ENCODE measurements at regions of chr14 and their contacts with region 1.

Region 1: DNA sequence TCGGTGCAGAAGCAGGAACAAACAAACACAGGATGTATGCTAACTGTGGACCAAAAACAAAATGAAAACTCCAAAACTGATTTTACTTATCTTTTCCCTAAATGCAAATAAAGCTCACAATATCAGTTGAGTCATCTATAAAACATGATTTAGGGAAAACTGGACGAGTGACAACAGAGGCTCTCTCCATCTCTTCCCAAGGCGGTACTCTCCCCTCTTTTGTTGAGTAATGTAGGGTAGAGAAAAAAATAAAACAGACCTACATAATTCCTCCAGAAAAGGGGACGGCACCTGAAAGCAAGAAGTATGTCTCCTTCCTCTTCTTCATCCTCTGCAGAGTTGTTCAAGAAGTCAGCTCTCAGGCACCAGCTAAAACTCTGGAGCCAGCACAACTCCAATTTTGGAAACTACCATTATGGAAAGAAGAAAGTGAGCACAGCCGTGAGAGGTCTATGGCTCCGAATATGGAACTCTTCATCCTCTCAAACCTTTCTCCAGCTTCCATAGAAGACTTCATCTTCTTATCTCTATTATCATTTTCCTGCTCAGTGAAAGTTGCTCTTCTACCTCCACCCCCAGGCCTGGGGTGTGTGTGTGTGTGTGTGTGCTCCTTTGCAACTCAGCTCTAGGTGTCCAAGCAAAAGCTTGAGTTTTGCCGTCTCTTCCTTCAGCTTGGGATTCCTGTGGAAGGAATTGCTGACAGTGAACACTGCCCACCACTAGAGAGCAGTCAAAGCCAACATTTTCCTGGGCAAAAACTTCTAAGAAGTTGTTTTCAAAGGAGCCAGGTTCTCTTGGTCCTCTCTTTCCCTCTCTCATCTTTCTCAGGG is 155.4 kb downstream of the DIO2 start:
- DNase-seq: peak; percentile 84
- ATAC-seq: peak; percentile 62
- H3K4me3 ChIP-seq: 0 out of 2 replicates have a peak overlapping the region, but pooled peaks have one; percentile 2
- H3K27ac ChIP-seq: peak overlapping the region; percentile 14; the same call in 1 of the 2 replicates
- H3K4me1 ChIP-seq: peaks cover 35% of the 10 kb centered on the region
- H3K27me3 ChIP-seq: no peaks in the 10 kb centered on the region
- CTCF ChIP-seq: peak; percentile 89

Region 2: GRCh38 chr14:79011091-79011919 is 1044.6 kb before region 1 on chr14:
- CTCF ChIA-PET with region 1: no interaction called
- POLR2A ChIA-PET with region 1: no interaction called
- intact Hi-C with region 1: loop called (anchors 5 kb)
- DNase-seq: peak; percentile 85
- ATAC-seq: peak; percentile 97
- H3K4me3 ChIP-seq: peak overlapping the region; percentile 23; the same call in 1 of the 2 replicates
- H3K27ac ChIP-seq: peak overlapping the region; percentile 88
- H3K4me1 ChIP-seq: peaks cover 14% of the 10 kb centered on the region
- H3K27me3 ChIP-seq: no peaks in the 10 kb centered on the region
- CTCF ChIP-seq: peak; percentile 47

Region 3: GRCh38 chr14:79992407-79993198 is 63.3 kb before region 1 on chr14:
- CTCF ChIA-PET with region 1: no interaction called
- POLR2A ChIA-PET with region 1: no interaction called
- intact Hi-C with region 1: no loop called
- DNase-seq: no peak
- ATAC-seq: no peak
- H3K4me3 ChIP-seq: no peak overlapping the region
- H3K27ac ChIP-seq: no peak overlapping the region
- H3K4me1 ChIP-seq: 0 out of 2 replicates have a peak, but pooled peaks cover 3% of the 10 kb centered on the region
- H3K27me3 ChIP-seq: no peaks in the 10 kb centered on the region
- CTCF ChIP-seq: no peak

Region 4: DNA sequence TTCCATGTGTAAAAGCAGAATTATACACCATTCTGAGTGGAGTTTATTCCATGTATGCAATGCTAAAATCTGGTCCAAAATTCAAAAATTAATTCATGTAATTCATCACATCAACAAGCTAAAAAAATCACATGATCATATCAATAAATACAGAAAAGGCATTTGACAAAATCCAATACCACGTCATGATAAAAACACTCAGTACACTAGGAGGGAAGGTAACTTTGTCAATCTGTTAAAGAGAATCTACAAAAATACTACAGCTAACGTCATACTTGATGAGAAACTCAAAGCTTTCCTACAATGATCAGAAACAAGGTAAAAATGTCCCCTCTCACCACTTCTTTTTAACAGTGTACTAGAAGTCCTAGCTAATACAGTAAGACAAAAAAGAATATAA is 137.1 kb after region 1 on chr14:
- CTCF ChIA-PET with region 1: no interaction called
- POLR2A ChIA-PET with region 1: no interaction called
- intact Hi-C with region 1: no loop called
- DNase-seq: no peak
- ATAC-seq: no peak
- H3K4me3 ChIP-seq: no peak overlapping the region
- H3K27ac ChIP-seq: no peak overlapping the region
- H3K4me1 ChIP-seq: no peaks in the 10 kb centered on the region
- H3K27me3 ChIP-seq: no peaks in the 10 kb centered on the region
- CTCF ChIP-seq: no peak

Region 5: GRCh38 chr14:80213599-80213998 is 157.7 kb after region 1 on chr14:
- CTCF ChIA-PET with region 1: interaction called, 3 read pairs
- POLR2A ChIA-PET with region 1: no interaction called
- intact Hi-C with region 1: loop called (anchors 2 kb)
- DNase-seq: peak; percentile 81
- ATAC-seq: peak; percentile 33; the same call in 1 of the 2 replicates
- H3K4me3 ChIP-seq: no peak overlapping the region
- H3K27ac ChIP-seq: peak overlapping the region; percentile 28
- H3K4me1 ChIP-seq: peaks cover 31% of the 10 kb centered on the region
- H3K27me3 ChIP-seq: no peaks in the 10 kb centered on the region
- CTCF ChIP-seq: peak; percentile 88

Region 6: DNA sequence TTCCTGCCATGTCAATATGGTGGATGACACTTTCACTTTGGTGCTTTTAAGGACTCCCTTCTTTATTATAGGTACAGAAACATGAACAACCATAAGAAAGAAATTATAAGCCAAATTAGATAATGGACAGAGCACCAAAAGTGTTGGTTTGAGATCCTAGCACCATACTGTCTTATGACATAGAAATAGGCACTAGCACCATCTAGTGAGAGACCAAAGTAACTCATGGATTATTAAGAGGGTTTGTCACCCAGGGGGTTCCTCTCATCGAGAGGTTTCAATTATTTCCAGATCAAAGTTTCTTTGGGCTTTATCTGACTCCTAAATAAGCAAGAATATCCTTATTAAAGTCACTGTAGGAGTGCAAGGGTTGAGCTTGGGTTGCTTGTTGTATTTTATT is 308.4 kb after region 1 on chr14:
- CTCF ChIA-PET with region 1: no interaction called
- POLR2A ChIA-PET with region 1: no interaction called
- intact Hi-C with region 1: loop called (anchors 1 kb)
- DNase-seq: peak; percentile 53
- ATAC-seq: peak; percentile 55; the same call in 1 of the 2 replicates
- H3K4me3 ChIP-seq: no peak overlapping the region
- H3K27ac ChIP-seq: no peak overlapping the region
- H3K4me1 ChIP-seq: no peaks in the 10 kb centered on the region
- H3K27me3 ChIP-seq: no peaks in the 10 kb centered on the region
- CTCF ChIP-seq: peak; percentile 77

Region 7: DNA sequence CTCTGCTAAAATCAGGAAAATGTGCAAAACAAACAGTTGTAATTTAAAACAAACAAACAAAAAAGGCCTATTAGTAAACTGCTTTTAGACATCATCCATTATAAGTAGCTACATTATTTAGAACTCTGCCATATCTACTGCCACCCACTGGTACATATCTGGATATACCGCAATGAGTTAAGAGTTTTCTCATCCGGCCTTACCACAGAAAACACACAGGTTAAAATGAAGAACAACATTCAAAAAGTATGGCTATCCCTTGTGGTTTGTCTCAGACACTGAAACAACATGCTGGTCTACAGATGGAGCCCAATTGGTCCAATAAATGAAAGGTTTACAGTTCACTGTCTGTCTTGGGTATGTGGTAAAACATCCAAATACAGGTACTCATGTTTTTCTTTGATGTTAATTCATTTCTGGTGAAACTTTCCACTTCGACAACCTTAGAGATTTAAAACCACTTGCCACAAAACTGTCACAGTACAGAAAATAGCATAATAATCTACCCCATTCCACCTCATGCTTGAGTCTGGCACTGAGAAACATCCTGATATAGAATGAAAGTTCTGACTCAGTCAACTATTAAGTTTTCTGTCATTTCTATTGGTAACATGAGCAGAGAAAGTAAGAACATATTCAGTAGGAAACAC is 531.3 kb after region 1 on chr14:
- CTCF ChIA-PET with region 1: interaction called, 3 read pairs
- POLR2A ChIA-PET with region 1: no interaction called
- intact Hi-C with region 1: loop called (anchors 1 kb)
- DNase-seq: peak; percentile 66
- ATAC-seq: peak; percentile 35; the same call in 1 of the 2 replicates
- H3K4me3 ChIP-seq: no peak overlapping the region
- H3K27ac ChIP-seq: peak overlapping the region; percentile 9; the same call in 1 of the 2 replicates
- H3K4me1 ChIP-seq: peaks cover 36% of the 10 kb centered on the region
- H3K27me3 ChIP-seq: no peaks in the 10 kb centered on the region
- CTCF ChIP-seq: peak; percentile 83

Region 8: GRCh38 chr14:80726211-80726610 is 670.3 kb after region 1 on chr14:
- CTCF ChIA-PET with region 1: no interaction called
- POLR2A ChIA-PET with region 1: no interaction called
- intact Hi-C with region 1: no loop called
- DNase-seq: no peak
- ATAC-seq: no peak
- H3K4me3 ChIP-seq: no peak overlapping the region
- H3K27ac ChIP-seq: no peak overlapping the region
- H3K4me1 ChIP-seq: no peaks in the 10 kb centered on the region
- H3K27me3 ChIP-seq: no peaks in the 10 kb centered on the region
- CTCF ChIP-seq: no peak

Region 9: DNA sequence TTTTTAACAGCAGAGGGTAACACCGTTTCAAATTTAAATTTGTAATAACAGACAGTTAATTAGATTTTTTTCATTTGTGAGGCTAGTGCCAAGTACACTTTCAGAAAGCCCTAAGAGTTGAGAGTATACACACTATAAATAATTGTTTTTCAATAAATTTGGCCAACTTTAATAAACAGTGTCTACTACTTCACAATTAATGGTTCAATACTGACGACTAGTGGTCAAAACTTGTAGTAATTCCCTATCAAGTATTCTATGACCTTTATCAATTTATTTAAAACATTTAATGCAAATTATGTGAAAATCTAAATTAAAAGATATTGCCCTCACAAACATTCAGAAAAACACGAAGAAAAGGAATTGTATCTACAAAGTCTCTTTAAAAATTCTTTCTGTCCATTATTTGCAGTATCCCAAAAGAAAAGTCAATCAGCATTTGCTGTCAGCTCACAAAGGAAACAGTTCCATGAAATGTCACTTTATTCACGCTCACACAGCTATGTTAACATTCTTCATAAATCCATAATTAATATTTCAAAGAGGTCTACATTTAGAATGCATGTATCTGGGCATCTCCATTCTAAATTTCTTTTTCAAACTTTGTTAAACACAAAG is 794.4 kb after region 1 on chr14:
- CTCF ChIA-PET with region 1: interaction called, 3 read pairs
- POLR2A ChIA-PET with region 1: no interaction called
- intact Hi-C with region 1: loop called (anchors 1 kb)
- DNase-seq: peak; percentile 71
- ATAC-seq: peak; percentile 45
- H3K4me3 ChIP-seq: no peak overlapping the region
- H3K27ac ChIP-seq: no peak overlapping the region
- H3K4me1 ChIP-seq: peaks cover 22% of the 10 kb centered on the region
- H3K27me3 ChIP-seq: no peaks in the 10 kb centered on the region
- CTCF ChIP-seq: peak; percentile 85

Measured in PC-3 (cell line).